ENCODE measurements at regions of chr10 and their contacts with region 1.

Region 1: GRCh38 chr10:121553511-121554264 is 44.6 kb downstream of the FGFR2 start:
- DNase-seq: peak; percentile 77
- H3K4me3 Mint-ChIP-seq: peak overlapping the region; percentile 22
- H3K27ac Mint-ChIP-seq: peak overlapping the region; percentile 65
- H3K4me1 Mint-ChIP-seq: peaks cover 24% of the 10 kb centered on the region
- H3K27me3 Mint-ChIP-seq: no peaks in the 10 kb centered on the region
- CTCF ChIP-seq: no peak

Region 2: GRCh38 chr10:120979435-120980278 is 574.0 kb before region 1 on chr10:
- CTCF ChIA-PET with region 1: interaction called, 10 read pairs
- intact Hi-C with region 1: no loop called
- DNase-seq: peak; percentile 66
- H3K4me3 Mint-ChIP-seq: peak overlapping the region; percentile 75
- H3K27ac Mint-ChIP-seq: no peak overlapping the region
- H3K4me1 Mint-ChIP-seq: peaks cover 36% of the 10 kb centered on the region
- H3K27me3 Mint-ChIP-seq: no peaks in the 10 kb centered on the region
- CTCF ChIP-seq: no peak

Region 3: GRCh38 chr10:121459765-121460453 is 93.8 kb before region 1 on chr10:
- CTCF ChIA-PET with region 1: no interaction called
- intact Hi-C with region 1: no loop called
- DNase-seq: no peak
- H3K4me3 Mint-ChIP-seq: no peak overlapping the region
- H3K27ac Mint-ChIP-seq: no peak overlapping the region
- H3K4me1 Mint-ChIP-seq: no peaks in the 10 kb centered on the region
- H3K27me3 Mint-ChIP-seq: no peaks in the 10 kb centered on the region
- CTCF ChIP-seq: no peak

Region 4: GRCh38 chr10:121527666-121528065 is 26.0 kb before region 1 on chr10:
- CTCF ChIA-PET with region 1: no interaction called
- intact Hi-C with region 1: no loop called
- DNase-seq: no peak
- H3K4me3 Mint-ChIP-seq: no peak overlapping the region
- H3K27ac Mint-ChIP-seq: no peak overlapping the region
- H3K4me1 Mint-ChIP-seq: peaks cover 30% of the 10 kb centered on the region
- H3K27me3 Mint-ChIP-seq: no peaks in the 10 kb centered on the region
- CTCF ChIP-seq: no peak

Region 5: GRCh38 chr10:121974535-121975294 is 421.0 kb after region 1 on chr10 and contains the start of gene NSMCE4A:
- CTCF ChIA-PET with region 1: no interaction called
- intact Hi-C with region 1: no loop called
- DNase-seq: peak; percentile 75
- H3K4me3 Mint-ChIP-seq: peak within 1 kb of the TSS; percentile 77
- H3K27ac Mint-ChIP-seq: no peak within 1 kb of the TSS
- H3K4me1 Mint-ChIP-seq: peaks cover 8% of the 10 kb centered on the region
- H3K27me3 Mint-ChIP-seq: no peaks in the 10 kb centered on the region
- CTCF ChIP-seq: no peak
- total RNA-seq, gene NSMCE4A: 28.8 and 33.3 TPM in 2 replicates

Region 6: GRCh38 chr10:122072491-122072890 is 518.8 kb after region 1 on chr10:
- CTCF ChIA-PET with region 1: no interaction called
- intact Hi-C with region 1: no loop called
- DNase-seq: no peak
- H3K4me3 Mint-ChIP-seq: no peak overlapping the region
- H3K27ac Mint-ChIP-seq: no peak overlapping the region
- H3K4me1 Mint-ChIP-seq: peaks cover 10% of the 10 kb centered on the region
- H3K27me3 Mint-ChIP-seq: no peaks in the 10 kb centered on the region
- CTCF ChIP-seq: no peak